Activated CD4-positive, alpha-beta memory T cell treated with anti-CD3 and anti-CD28 coated beads, Interleukin-2, amount 10 ng/mL, durations not matched to agents 7 days and 5 days (primary cell): ENCODE measurements at regions of chr3 and their contacts with region 1.

Region 1: GRCh38 chr3:167684388-167684993 is 30.7 kb upstream of the WDR49 start:
- DNase-seq: peak; percentile 30
- H3K4me3 Mint-ChIP-seq: no peak overlapping the region
- H3K27ac Mint-ChIP-seq: no peak overlapping the region
- H3K4me1 Mint-ChIP-seq: peaks cover 4% of the 10 kb centered on the region
- H3K27me3 Mint-ChIP-seq: no peaks in the 10 kb centered on the region

Region 2: DNA sequence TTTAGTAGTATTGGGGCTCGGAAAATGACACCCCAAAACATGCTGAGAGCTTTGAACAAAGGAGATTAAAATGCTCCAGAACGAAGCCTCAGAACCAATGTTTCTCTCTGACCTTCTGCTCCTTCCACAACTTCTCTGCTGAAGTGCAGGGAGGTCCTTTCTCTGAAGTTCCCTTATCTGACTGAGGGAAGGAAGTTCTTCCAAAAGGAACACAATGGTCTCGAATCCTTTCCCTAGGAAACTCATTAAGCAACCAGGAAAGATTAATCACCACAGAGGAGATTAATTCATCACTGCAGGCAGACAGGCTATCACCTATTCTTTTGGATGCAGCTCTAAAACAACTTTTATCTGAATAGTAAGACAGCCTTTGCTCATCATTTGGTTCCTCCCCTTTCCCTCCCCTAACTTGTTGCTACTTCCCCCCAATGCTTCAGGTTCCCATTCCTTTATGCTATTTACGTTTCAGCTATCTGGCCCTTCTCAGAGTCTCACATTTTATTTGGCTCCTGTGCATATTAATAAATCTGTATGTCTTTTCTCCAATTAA is 12.5 kb before region 1 on chr3:
- CTCF ChIA-PET with region 1: interaction called, 24 read pairs
- POLR2A ChIA-PET with region 1: interaction called, 3 read pairs
- DNase-seq: no peak
- H3K4me3 Mint-ChIP-seq: no peak overlapping the region
- H3K27ac Mint-ChIP-seq: no peak overlapping the region
- H3K4me1 Mint-ChIP-seq: no peaks in the 10 kb centered on the region
- H3K27me3 Mint-ChIP-seq: no peaks in the 10 kb centered on the region

Region 3: DNA sequence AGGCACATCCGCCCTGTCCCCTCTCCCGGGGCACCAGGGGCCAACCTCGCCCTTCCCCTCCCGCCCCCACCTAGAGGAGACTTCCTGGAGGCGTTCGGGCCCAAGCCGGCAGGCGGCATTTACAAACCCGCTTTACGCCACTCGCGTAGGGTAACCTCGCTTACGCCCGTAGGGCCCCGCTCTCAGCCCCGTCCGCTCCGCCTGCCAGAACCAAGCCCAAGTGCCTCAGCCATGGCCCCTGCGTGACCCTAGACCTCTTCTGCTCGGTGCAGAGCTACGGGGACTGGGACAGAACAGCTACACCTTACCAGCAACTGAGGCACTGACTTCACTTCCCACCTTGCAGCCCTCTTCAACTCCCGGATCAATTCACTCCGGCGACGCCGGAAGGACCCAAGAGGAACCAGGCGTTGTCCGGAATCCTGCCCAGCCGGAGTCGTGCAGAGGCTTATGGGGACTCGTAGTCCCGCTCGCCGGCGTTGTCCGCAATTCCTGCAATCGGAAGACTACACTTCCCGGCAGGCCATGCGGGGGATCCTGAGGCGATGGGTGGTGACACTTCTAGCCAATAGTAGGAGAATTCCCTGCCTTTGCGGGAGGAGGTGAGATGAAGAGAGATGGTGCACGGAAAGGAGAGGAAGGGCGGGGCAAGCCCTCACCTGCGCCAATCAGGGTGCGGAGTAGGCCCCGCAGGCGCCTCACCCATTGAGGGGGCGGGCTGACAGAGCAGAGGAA is 50.2 kb after region 1 on chr3 and contains the start of gene PDCD10:
- CTCF ChIA-PET with region 1: interaction called, 14 read pairs
- POLR2A ChIA-PET with region 1: no interaction called
- DNase-seq: peak; percentile 98
- H3K4me3 Mint-ChIP-seq: no peak within 1 kb of the TSS
- H3K27ac Mint-ChIP-seq: no peak within 1 kb of the TSS
- H3K4me1 Mint-ChIP-seq: peaks cover 26% of the 10 kb centered on the region
- H3K27me3 Mint-ChIP-seq: no peaks in the 10 kb centered on the region
- total RNA-seq, gene PDCD10: 68.3 to 71.9 TPM

Region 4: DNA sequence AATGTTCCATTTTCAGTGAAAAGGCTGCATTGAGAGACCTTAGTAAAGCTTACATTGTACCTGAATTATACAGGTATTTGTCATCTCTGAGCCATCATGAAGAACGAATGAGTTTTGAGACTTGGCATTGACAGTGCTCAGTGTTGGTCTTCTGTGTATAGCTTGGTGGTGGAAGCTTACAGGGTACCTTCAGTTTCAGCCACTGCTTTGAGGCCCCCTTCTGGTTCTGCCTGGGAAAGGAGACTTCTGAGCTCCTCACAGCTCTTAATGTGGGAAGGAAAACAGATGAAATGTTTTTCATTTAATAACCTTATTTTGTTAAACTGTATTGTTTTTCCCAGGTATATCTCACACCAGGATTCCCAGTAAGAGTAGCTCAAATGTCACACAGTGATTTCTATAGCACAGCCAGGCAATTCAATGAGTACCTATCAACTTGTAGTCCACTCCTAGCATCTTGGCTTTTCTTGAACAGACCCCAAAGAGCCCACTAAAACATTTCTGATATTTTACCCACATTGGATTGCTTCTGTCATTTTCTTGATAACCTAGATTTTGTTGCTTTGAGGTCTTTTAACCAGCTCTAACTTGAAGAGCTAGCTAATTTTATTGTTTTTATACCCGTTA is 56.6 kb after region 1 on chr3:
- CTCF ChIA-PET with region 1: interaction called, 14 read pairs
- POLR2A ChIA-PET with region 1: no interaction called
- DNase-seq: peak; percentile 22
- H3K4me3 Mint-ChIP-seq: no peak overlapping the region
- H3K27ac Mint-ChIP-seq: no peak overlapping the region
- H3K4me1 Mint-ChIP-seq: peaks cover 3% of the 10 kb centered on the region
- H3K27me3 Mint-ChIP-seq: no peaks in the 10 kb centered on the region